Activated CD4-positive, alpha-beta memory T cell treated with anti-CD3 and anti-CD28 coated beads for 36 hours (primary cell): ENCODE measurements at regions of chr13 and their contacts with region 1.

Region 1: GRCh38 chr13:32427852-32428580 is at the start of gene N4BP2L1:
- DNase-seq: peak; percentile 94
- H3K4me3 Mint-ChIP-seq: peak within 1 kb of the TSS; percentile 88
- H3K27ac Mint-ChIP-seq: peak within 1 kb of the TSS; percentile 96
- H3K4me1 Mint-ChIP-seq: peaks cover 38% of the 10 kb centered on the region
- H3K27me3 Mint-ChIP-seq: no peaks in the 10 kb centered on the region
- total RNA-seq, gene N4BP2L1: 22.1 to 24.0 TPM

Region 2: DNA sequence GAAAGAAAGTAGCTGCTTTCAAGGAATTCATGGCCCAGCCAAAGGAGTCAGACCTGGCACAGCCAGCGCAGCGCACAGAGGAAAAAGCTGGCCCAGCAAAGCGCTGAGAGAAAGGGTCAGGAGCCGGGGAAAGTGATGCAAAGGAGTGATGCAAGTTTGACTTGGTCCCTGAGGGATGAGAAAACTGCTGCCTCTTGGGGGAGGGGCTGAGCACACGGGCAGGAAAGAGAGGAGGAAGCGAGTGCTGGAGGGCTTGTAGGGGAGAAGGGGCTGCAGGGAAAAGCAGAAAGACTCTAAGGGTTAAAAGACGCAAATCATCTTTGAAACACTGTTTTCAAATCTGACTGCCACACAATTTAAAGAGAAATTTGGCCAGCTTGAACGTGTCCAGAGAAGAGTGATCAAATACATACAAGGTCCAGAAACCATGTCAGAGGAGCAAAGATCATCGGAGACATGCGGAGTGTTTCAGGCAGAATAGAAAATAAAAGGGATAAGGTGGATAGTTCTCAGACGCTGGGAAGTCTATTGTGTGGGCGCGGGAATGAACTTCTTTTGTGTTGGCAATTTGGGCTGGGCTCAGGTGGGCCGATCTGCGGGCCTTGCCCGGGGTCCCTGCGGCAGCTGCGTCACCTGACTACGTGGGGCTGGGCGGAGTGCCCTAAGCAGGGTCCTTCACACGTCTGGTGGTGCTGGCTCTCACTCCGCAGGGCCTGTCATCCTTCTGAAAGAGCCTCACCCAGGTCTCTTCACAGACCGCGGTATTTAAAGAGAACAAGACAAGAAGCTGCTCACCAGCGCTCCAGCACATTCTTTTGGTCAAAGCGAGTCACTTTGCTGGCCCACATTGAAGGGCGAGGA is 18.2 kb before region 1 on chr13:
- CTCF ChIA-PET with region 1: interaction called, 6 read pairs
- POLR2A ChIA-PET with region 1: interaction called, 12 read pairs
- intact Hi-C with region 1: loop called (anchors 1 kb)
- DNase-seq: no peak
- H3K4me3 Mint-ChIP-seq: no peak overlapping the region
- H3K27ac Mint-ChIP-seq: no peak overlapping the region
- H3K4me1 Mint-ChIP-seq: peaks cover 23% of the 10 kb centered on the region
- H3K27me3 Mint-ChIP-seq: no peaks in the 10 kb centered on the region

Region 3: GRCh38 chr13:32415019-32415418 is 13.0 kb before region 1 on chr13:
- CTCF ChIA-PET with region 1: interaction called, 6 read pairs
- POLR2A ChIA-PET with region 1: no interaction called
- intact Hi-C with region 1: loop called (anchors 1 kb)
- DNase-seq: peak; percentile 37
- H3K4me3 Mint-ChIP-seq: no peak overlapping the region
- H3K27ac Mint-ChIP-seq: no peak overlapping the region
- H3K4me1 Mint-ChIP-seq: peaks cover 2% of the 10 kb centered on the region
- H3K27me3 Mint-ChIP-seq: no peaks in the 10 kb centered on the region

Region 4: GRCh38 chr13:32984846-32985544 is 557.0 kb after region 1 on chr13:
- CTCF ChIA-PET with region 1: no interaction called
- POLR2A ChIA-PET with region 1: no interaction called
- intact Hi-C with region 1: no loop called
- DNase-seq: no peak
- H3K4me3 Mint-ChIP-seq: no peak overlapping the region
- H3K27ac Mint-ChIP-seq: no peak overlapping the region
- H3K4me1 Mint-ChIP-seq: peaks cover 5% of the 10 kb centered on the region
- H3K27me3 Mint-ChIP-seq: peaks cover 6% of the 10 kb centered on the region